HEK293 (cell line): ENCODE measurements at regions of chr1 and their contacts with region 1.

Region 1: GRCh38 chr1:64136752-64137411 is 66.5 kb upstream of the UBE2U start:
- H3K4me3 ChIP-seq: no peak overlapping the region
- H3K27ac ChIP-seq: no peak overlapping the region
- H3K4me1 ChIP-seq: no peaks in the 10 kb centered on the region
- CTCF ChIP-seq: peak; percentile 73

Region 2: DNA sequence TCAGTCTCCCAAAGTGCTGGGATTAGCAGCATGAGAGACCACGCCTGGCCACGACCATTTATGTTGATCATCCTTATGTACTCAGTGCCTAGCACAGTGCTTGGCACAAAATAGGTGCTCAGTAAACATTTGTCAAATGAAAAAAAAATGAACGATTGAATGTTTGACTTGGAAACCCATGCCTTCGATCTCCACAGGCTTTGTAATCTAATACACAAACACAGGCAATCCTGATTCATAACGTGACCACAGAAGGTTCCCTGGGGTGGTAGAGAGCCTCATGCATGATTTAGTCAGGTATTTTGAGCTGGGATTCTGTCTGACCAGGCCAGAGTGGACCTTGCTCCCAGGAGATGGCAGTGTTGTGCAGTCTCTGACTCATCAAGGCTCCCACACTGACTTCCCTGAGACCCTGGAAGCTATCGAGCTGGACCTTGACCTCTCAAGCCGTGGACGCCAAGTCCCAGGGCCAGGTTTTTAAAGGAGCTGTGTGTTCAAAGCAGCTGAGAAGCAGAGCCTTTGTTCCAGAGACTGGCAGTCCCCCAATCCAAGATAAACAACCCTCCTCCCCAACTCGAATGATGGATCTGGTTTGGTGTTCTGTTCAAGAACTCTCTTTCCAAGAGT is 462.5 kb before region 1 on chr1:
- CTCF ChIA-PET with region 1: interaction called, 23 read pairs
- POLR2A ChIA-PET with region 1: no interaction called
- H3K4me3 ChIP-seq: no peak overlapping the region
- H3K27ac ChIP-seq: no peak overlapping the region
- H3K4me1 ChIP-seq: no peaks in the 10 kb centered on the region; the same call in 1 of the 2 replicates
- CTCF ChIP-seq: peak; percentile 55; the same call in 1 of the 2 replicates

Region 3: DNA sequence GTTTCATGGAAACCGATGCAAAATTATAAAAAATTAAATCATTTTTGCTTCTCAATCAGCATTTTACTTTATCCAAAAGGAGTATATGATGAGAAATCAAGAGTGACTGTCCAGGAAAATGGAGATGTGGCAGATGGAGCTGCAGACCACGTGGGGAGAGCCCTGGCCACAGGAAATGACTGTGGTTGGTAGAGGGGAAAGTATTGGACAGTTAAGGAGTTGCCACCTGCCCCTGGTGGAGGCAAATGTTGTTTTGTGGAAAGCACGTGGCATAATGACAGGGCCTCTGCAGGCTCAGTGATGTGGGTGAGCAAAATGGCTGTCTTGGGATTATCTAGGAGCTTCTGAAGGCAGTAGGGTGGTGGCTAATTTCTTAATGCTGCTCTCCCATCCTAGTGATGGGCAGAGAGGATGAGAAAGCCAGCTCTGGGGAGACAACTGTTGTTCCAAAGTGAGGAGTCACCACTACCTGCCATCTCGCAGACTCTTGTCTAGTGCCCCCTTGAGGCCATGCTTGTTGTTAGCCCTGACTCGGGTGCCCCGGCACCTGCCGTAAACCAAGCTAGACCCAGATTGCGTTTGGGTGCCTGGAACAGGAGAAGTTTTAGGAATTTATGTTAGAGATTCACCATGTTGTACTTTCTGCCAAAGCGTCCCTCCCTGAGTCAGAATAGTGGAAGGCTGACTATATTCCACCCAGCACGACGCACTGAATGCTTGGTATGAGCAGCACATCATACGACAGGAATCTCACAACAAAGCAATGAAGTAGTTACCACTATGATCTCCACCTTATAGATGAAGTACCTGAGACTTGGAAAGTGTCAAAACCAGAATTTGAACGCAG is 219.1 kb before region 1 on chr1:
- CTCF ChIA-PET with region 1: interaction called, 12 read pairs
- POLR2A ChIA-PET with region 1: no interaction called
- H3K4me3 ChIP-seq: no peak overlapping the region
- H3K27ac ChIP-seq: no peak overlapping the region
- H3K4me1 ChIP-seq: peaks cover 11% of the 10 kb centered on the region
- CTCF ChIP-seq: no peak

Region 4: DNA sequence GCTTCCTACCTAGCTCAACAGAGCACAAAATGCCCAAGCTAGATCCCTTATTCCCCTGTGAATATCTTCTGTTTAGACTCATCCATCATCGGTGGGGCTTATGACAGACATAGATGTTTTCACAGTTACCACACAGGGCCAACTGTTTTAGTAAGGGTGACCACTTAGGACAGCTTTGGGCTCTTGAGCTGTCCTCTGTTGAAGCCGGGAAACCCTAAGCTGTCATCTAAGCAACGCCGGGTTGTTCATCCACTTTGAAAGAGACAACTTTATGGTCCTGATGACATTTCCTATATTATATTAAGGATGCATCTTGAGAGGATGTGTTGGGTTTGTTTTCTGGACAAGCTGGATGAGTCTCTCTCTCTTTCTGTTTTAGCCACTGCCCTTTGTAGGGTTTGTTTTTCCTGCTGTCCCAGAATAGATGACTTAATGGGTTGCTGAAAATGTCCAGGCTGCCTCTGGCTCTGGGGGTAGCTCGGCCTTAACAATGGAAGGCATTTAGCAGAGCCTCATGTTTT is 44.0 kb before region 1 on chr1:
- CTCF ChIA-PET with region 1: no interaction called
- POLR2A ChIA-PET with region 1: no interaction called
- H3K4me3 ChIP-seq: no peak overlapping the region
- H3K27ac ChIP-seq: no peak overlapping the region
- H3K4me1 ChIP-seq: 0 out of 2 replicates have a peak, but pooled peaks cover 2% of the 10 kb centered on the region
- CTCF ChIP-seq: no peak

Region 5: GRCh38 chr1:64110924-64111777 is 25.7 kb before region 1 on chr1:
- CTCF ChIA-PET with region 1: interaction called, 18 read pairs
- POLR2A ChIA-PET with region 1: no interaction called
- H3K4me3 ChIP-seq: no peak overlapping the region
- H3K27ac ChIP-seq: no peak overlapping the region
- H3K4me1 ChIP-seq: no peaks in the 10 kb centered on the region
- CTCF ChIP-seq: no peak

Region 6: GRCh38 chr1:64163970-64164369 is 27.1 kb after region 1 on chr1:
- CTCF ChIA-PET with region 1: interaction called, 15 read pairs
- POLR2A ChIA-PET with region 1: no interaction called
- H3K4me3 ChIP-seq: no peak overlapping the region
- H3K27ac ChIP-seq: no peak overlapping the region
- H3K4me1 ChIP-seq: peaks cover 10% of the 10 kb centered on the region
- CTCF ChIP-seq: no peak

Region 7: DNA sequence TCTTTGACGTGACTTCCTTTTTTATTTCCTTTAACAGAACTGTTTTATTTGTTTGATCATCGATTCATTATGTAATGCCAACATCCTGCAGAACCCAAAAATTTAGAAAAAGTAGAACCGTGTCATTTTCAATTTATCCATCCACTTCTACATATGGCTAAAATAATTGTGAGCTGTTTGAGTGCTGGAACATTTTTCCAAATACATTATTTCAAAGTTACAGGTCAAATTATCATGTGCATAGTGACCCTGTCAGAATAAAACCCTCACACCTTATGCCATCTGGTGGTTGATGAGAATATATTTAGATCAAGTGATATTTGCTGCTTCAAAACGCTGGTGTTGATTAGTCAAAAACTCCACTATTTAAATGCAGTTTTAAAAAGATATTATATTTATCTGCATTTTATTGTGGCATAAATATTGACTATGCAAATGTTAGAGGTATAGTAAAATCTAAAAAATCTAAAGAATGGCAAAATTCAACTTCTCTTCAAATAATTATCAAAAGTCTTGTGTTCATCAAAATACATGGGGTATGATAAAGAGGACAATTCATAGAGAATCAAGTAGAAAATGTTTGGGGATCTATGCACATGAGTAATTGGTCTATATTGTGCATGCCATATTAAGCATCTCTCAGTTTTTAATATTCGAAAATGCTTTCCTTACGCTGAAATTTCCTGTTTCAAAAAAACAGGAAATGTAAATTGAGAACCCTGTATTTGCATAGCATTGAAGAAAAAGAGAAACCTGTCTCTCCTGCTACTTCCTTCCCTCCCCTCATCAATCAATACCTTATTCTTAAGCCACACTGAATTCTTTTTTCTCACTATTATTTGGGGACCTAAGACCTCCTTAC is 106.2 kb after region 1 on chr1:
- CTCF ChIA-PET with region 1: interaction called, 29 read pairs
- POLR2A ChIA-PET with region 1: no interaction called
- H3K4me3 ChIP-seq: no peak overlapping the region
- H3K27ac ChIP-seq: no peak overlapping the region
- H3K4me1 ChIP-seq: peaks cover 10% of the 10 kb centered on the region
- CTCF ChIP-seq: no peak